GM12878 (cell line): ENCODE measurements at regions of chr1 and their contacts with region 1.

Region 1: GRCh38 chr1:245645894-245646293 is 491.1 kb downstream of the KIF26B start:
- DNase-seq: peak; percentile 72
- ATAC-seq: peak; percentile 76
- H3K4me3 ChIP-seq: peak overlapping the region; percentile 61
- H3K27ac ChIP-seq: peak overlapping the region; percentile 84
- H3K4me1 ChIP-seq: peaks cover 21% of the 10 kb centered on the region
- H3K27me3 ChIP-seq: no peaks in the 10 kb centered on the region
- CTCF ChIP-seq: no peak
- EP300 ChIP-seq: peak; percentile 46 to 78; a peak in 2 of 4 replicates
- POLR2A ChIP-seq: no peak
- RAD21 ChIP-seq: no peak

Region 2: GRCh38 chr1:245894843-245895242 is 248.9 kb after region 1 on chr1:
- CTCF ChIA-PET with region 1: interaction called, 11 read pairs
- POLR2A ChIA-PET with region 1: no interaction called
- RAD21 ChIA-PET with region 1: interaction called, 6 read pairs
- SMC1A ChIA-PET with region 1: interaction called, 8 read pairs
- in situ Hi-C with region 1: no loop called
- intact Hi-C with region 1: loop called (anchors 5 kb)
- DNase-seq: peak; percentile 59
- ATAC-seq: peak; percentile 95
- H3K4me3 ChIP-seq: no peak overlapping the region
- H3K27ac ChIP-seq: peak overlapping the region; percentile 47
- H3K4me1 ChIP-seq: peaks cover 4% of the 10 kb centered on the region; the same call in 1 of the 2 replicates
- H3K27me3 ChIP-seq: no peaks in the 10 kb centered on the region
- CTCF ChIP-seq: no peak
- EP300 ChIP-seq: peak; percentile 48 to 67; a peak in 2 of 4 replicates
- POLR2A ChIP-seq: no peak
- RAD21 ChIP-seq: no peak

Region 3: GRCh38 chr1:246329900-246330299 is 684.0 kb after region 1 on chr1:
- CTCF ChIA-PET with region 1: no interaction called
- POLR2A ChIA-PET with region 1: no interaction called
- RAD21 ChIA-PET with region 1: no interaction called
- SMC1A ChIA-PET with region 1: no interaction called
- in situ Hi-C with region 1: no loop called
- intact Hi-C with region 1: loop called (anchors 10 kb)
- DNase-seq: peak; percentile 91
- ATAC-seq: peak; percentile 94
- H3K4me3 ChIP-seq: no peak overlapping the region
- H3K27ac ChIP-seq: no peak overlapping the region
- H3K4me1 ChIP-seq: peaks cover 16% of the 10 kb centered on the region
- H3K27me3 ChIP-seq: no peaks in the 10 kb centered on the region
- CTCF ChIP-seq: peak in 2 of 3 experiments; percentile 6 to 15; a peak in 2 of 6 replicates
- EP300 ChIP-seq: peak; percentile 85 to 90
- POLR2A ChIP-seq: no peak
- RAD21 ChIP-seq: no peak